Kidney (tissue), 22 donors: ENCODE measurements at regions of chr17 and their contacts with region 1.

Region 1: GRCh38 chr17:34542700-34543336 is 36.6 kb upstream of the TMEM132E start:
- DNase-seq: peak in 1 of 5 donors; percentile 9
- H3K4me3 ChIP-seq: no peak overlapping the region
- H3K27ac ChIP-seq: no peak overlapping the region
- H3K4me1 ChIP-seq: no peaks in the 10 kb centered on the region
- H3K27me3 ChIP-seq: no peaks in the 10 kb centered on the region
- CTCF ChIP-seq: peak; percentile 66

Region 2: DNA sequence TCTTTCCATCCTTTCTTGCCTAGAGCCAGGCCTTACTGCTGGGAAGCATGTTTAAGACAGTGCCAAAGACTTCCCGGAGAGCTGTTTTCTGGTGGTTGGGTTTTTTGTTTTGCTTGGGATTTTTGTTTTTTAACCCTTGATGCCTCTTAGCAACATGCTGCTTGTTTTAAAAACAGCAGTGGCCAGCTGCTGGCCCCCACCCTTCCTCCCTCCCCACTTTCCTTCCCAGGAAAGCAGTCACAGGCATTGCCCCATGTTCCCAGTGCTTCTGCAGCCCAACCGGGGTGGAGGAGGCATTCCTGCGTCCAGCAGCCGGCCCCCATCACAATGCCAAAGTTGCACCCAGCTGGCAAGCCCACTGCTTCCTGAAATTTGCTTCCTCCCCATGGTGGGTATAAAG is 49.2 kb after region 1 on chr17:
- intact Hi-C with region 1: loop called (anchors 5 kb)
- DNase-seq: peak in 1 of 5 donors; percentile 60
- H3K4me3 ChIP-seq: no peak overlapping the region
- H3K27ac ChIP-seq: no peak overlapping the region
- H3K4me1 ChIP-seq: peaks cover 0 to 8% (median 4%) of the 10 kb centered on the region in 3 donors
- H3K27me3 ChIP-seq: no peaks in the 10 kb centered on the region
- CTCF ChIP-seq: no peak

Region 3: GRCh38 chr17:34665150-34665806 is 122.5 kb after region 1 on chr17:
- intact Hi-C with region 1: no loop called
- DNase-seq: no peak
- H3K4me3 ChIP-seq: no peak overlapping the region
- H3K27ac ChIP-seq: no peak overlapping the region
- H3K4me1 ChIP-seq: no peaks in the 10 kb centered on the region
- H3K27me3 ChIP-seq: no peaks in the 10 kb centered on the region
- CTCF ChIP-seq: no peak

Region 4: GRCh38 chr17:34998205-34998604 is 455.4 kb after region 1 on chr17:
- intact Hi-C with region 1: no loop called
- DNase-seq: peak in 4 of 5 donors; percentile 47 to 75 (median 58)
- H3K4me3 ChIP-seq: no peak overlapping the region
- H3K27ac ChIP-seq: peak overlapping the region in 1 of 2 donors; percentile 33
- H3K4me1 ChIP-seq: peaks cover 0 to 10% (median 9%) of the 10 kb centered on the region in 3 donors
- H3K27me3 ChIP-seq: no peaks in the 10 kb centered on the region
- CTCF ChIP-seq: peak; percentile 68